IMR-90 (cell line): ENCODE measurements at regions of chr3 and their contacts with region 1.

Region 1: GRCh38 chr3:53318522-53318921 is 28.8 kb downstream of the DCP1A start:
- DNase-seq: peak; percentile 69
- ATAC-seq: peak; percentile 88
- H3K4me3 ChIP-seq: no peak overlapping the region
- H3K27ac ChIP-seq: peak overlapping the region; percentile 66; the same call in 1 of the 2 replicates
- H3K4me1 ChIP-seq: peaks cover 8% of the 10 kb centered on the region
- H3K27me3 ChIP-seq: no peaks in the 10 kb centered on the region
- CTCF ChIP-seq: no peak
- POLR2A ChIP-seq: no peak
- RAD21 ChIP-seq: no peak

Region 2: GRCh38 chr3:53493963-53494791 is 175.7 kb after region 1 on chr3 and contains the start of gene CACNA1D:
- CTCF ChIA-PET with region 1: no interaction called
- POLR2A ChIA-PET with region 1: no interaction called
- dilution Hi-C with region 1: no loop called
- in situ Hi-C with region 1: no loop called
- intact Hi-C with region 1: loop called (anchors 10 kb)
- DNase-seq: no peak
- ATAC-seq: peak; percentile 71
- H3K4me3 ChIP-seq: peak within 1 kb of the TSS; percentile 15; the same call in 1 of the 2 replicates
- H3K27ac ChIP-seq: no peak within 1 kb of the TSS
- H3K4me1 ChIP-seq: no peaks in the 10 kb centered on the region
- H3K27me3 ChIP-seq: peaks cover 51% of the 10 kb centered on the region
- CTCF ChIP-seq: no peak
- POLR2A ChIP-seq: no peak
- RAD21 ChIP-seq: no peak
- total RNA-seq, gene CACNA1D: under 0.01 TPM in 1 of 2 replicates, not detected in the other